PC-3 (cell line): ENCODE measurements at regions of chr7 and their contacts with region 1.

Region 1: DNA sequence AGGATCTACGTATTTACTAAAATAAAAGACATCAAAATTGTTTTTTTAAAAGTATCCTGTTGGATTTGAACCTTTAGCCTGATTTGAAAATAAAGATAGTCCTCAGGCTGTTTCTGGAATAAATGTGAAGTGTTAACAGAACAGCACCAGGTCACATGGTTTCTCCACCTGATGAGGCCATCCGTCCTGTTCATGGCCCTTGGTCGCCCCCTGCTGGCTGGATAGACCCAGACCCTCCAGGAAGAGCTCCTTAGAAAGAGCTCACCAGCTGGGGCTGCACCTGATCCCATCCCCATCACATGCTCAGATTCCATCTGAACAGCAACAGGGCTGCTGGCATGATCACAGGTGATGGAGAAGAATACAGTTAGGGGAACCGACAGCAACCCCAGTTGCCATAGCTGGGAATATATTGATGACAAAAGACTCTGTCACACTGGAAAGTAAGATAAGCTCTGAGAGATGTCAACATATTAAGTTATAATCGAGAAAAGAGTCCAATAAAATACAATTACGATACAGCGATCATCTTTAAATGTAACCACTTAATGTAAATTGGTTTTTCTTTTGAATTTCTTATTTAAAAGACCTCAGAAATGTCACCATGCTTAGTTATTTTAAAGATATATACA is 4.8 kb downstream of the OR2A14 start:
- DNase-seq: peak; percentile 88
- ATAC-seq: peak; percentile 99
- H3K4me3 ChIP-seq: no peak overlapping the region
- H3K27ac ChIP-seq: no peak overlapping the region
- H3K4me1 ChIP-seq: no peaks in the 10 kb centered on the region
- H3K27me3 ChIP-seq: no peaks in the 10 kb centered on the region
- CTCF ChIP-seq: peak; percentile 93

Region 2: GRCh38 chr7:143901668-143902331 is 226.0 kb before region 1 on chr7 and contains the start of gene TCAF1:
- CTCF ChIA-PET with region 1: interaction called, 47 read pairs
- POLR2A ChIA-PET with region 1: interaction called, 4 read pairs
- intact Hi-C with region 1: loop called (anchors 1 kb)
- DNase-seq: peak; percentile 88
- ATAC-seq: peak; percentile 91
- H3K4me3 ChIP-seq: peak within 1 kb of the TSS; percentile 89
- H3K27ac ChIP-seq: peak within 1 kb of the TSS; percentile 84
- H3K4me1 ChIP-seq: peaks cover 24% of the 10 kb centered on the region
- H3K27me3 ChIP-seq: no peaks in the 10 kb centered on the region
- CTCF ChIP-seq: peak; percentile 61
- total RNA-seq, gene TCAF1: 12.4 and 16.9 TPM in 2 replicates

Region 3: DNA sequence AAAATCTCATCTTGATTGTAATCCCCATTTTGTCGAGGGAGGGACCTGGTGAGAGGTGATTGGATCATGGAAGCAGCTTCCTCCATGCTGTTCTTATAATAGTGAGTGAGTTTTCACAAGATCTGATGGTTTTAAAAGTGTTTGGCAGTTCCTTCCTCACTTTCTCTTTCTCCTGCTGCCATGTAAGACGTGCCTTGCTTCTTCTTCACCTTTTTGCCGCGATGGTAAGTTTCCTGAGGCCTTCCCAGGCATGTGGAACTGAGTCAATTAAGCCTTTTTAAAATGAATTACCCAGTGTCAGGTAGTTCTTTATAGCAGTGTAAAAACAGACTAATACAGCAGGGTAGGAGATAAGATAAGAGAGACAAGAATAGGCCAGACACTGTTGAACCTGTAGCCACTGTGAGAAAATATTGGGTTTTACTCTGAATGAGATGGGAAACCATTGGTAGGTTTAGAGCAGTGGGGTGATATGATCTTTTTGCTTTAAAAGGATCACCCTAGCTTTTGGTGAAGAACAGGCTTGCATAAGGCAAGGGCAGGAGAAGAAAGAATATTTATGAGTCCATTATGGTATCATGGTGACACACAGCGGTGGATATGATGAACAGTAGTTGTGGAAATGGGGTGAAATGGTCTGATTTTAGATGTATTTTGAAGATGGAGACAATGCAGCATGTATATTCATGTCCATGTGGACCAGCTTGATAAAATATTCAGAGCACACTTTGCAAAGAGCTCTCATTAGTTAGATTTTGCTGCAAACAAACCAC is 116.2 kb before region 1 on chr7:
- CTCF ChIA-PET with region 1: interaction called, 10 read pairs
- POLR2A ChIA-PET with region 1: no interaction called
- intact Hi-C with region 1: loop called (anchors 1 kb)
- DNase-seq: peak; percentile 55
- ATAC-seq: peak; percentile 95
- H3K4me3 ChIP-seq: no peak overlapping the region
- H3K27ac ChIP-seq: no peak overlapping the region
- H3K4me1 ChIP-seq: no peaks in the 10 kb centered on the region
- H3K27me3 ChIP-seq: no peaks in the 10 kb centered on the region
- CTCF ChIP-seq: peak; percentile 67

Region 4: DNA sequence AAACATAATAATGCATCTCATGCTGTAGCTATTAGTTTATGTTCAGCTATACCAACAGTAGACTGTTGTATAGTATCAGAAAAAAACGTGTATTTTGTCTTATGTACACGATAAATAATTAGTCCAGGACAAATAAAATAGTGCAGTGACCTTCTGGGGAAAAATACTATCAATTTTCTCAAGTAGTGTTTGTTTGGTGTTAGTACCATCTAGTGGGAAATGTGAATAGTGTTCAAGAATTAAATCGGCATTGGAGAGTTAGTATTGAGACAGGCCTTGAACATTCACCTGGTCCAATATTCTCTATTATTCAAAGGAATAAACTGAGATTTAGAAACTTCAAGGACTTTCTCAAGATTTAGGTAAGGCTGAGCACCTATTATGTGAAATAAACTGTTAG is 100.7 kb before region 1 on chr7:
- CTCF ChIA-PET with region 1: interaction called, 13 read pairs
- POLR2A ChIA-PET with region 1: no interaction called
- intact Hi-C with region 1: loop called (anchors 1 kb)
- DNase-seq: peak; percentile 52
- ATAC-seq: peak; percentile 68
- H3K4me3 ChIP-seq: no peak overlapping the region
- H3K27ac ChIP-seq: no peak overlapping the region
- H3K4me1 ChIP-seq: peaks cover 7% of the 10 kb centered on the region; the same call in 1 of the 2 replicates
- H3K27me3 ChIP-seq: no peaks in the 10 kb centered on the region
- CTCF ChIP-seq: peak; percentile 66

Region 5: GRCh38 chr7:144057972-144058371 is 69.8 kb before region 1 on chr7:
- CTCF ChIA-PET with region 1: interaction called, 7 read pairs
- POLR2A ChIA-PET with region 1: no interaction called
- intact Hi-C with region 1: loop called (anchors 2 kb)
- DNase-seq: peak; percentile 88
- ATAC-seq: peak; percentile 99
- H3K4me3 ChIP-seq: no peak overlapping the region
- H3K27ac ChIP-seq: peak overlapping the region; percentile 98
- H3K4me1 ChIP-seq: peaks cover 11% of the 10 kb centered on the region
- H3K27me3 ChIP-seq: no peaks in the 10 kb centered on the region
- CTCF ChIP-seq: no peak

Region 6: DNA sequence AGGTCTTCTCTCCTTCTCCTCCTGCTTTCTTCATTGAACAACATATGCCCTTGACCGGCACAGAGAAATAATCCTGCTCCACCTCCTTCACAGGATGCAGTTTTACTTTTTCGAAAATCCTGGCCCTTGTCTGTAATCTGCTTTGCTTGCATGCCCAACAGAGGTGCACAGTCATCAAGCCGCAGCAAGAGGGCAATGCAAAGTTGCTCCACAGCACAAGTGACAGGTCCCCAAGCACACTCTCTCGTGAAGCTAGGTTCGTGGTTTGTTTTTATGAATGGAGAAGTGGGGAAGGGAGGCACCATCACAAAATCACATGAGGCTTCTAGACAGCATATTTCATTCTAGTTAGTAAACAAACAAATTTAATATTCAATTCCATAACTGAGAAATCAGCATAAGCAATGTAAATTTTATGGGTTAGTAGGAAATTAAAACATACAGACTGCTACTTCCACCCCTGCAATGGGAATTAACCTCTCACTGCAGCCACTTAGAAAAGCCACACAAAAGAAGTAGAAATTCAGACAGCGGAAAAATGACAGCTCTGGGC is 529.2 kb after region 1 on chr7:
- CTCF ChIA-PET with region 1: no interaction called
- POLR2A ChIA-PET with region 1: no interaction called
- intact Hi-C with region 1: no loop called
- DNase-seq: no peak
- ATAC-seq: peak; percentile 64
- H3K4me3 ChIP-seq: no peak overlapping the region
- H3K27ac ChIP-seq: no peak overlapping the region
- H3K4me1 ChIP-seq: no peaks in the 10 kb centered on the region
- H3K27me3 ChIP-seq: no peaks in the 10 kb centered on the region
- CTCF ChIP-seq: peak; percentile 7; the same call in 1 of the 2 replicates